ENCODE measurements at regions of chr5 and their contacts with region 1.

Region 1: DNA sequence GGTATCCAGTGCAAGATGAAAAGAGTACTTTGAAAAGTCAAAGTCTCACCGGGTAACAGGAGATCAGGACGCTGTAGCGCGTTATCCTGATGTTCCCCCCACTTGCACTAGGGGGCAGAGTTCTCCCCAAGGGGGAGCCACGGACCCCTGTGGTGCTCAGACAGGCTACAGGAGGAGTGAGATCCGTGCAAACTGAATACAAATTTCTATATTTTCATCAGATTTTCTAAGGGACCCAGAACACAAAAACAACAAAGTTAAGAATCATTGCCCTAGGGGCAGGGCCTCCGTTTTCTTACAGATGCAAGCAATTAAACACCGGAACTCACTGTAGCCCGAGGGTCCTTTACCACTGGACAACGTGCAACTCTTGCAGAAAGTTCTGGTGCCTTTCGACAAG is 2.0 kb downstream of the MYO10 start:
- DNase-seq: peak; percentile 80
- ATAC-seq: peak; percentile 55
- H3K4me3 ChIP-seq: peak overlapping the region; percentile 85
- H3K27ac ChIP-seq: peak overlapping the region; percentile 99
- H3K4me1 ChIP-seq: peaks cover 15% of the 10 kb centered on the region
- H3K27me3 ChIP-seq: no peaks in the 10 kb centered on the region
- CTCF ChIP-seq: peak; percentile 88
- POLR2A ChIP-seq: peak; percentile 74
- RAD21 ChIP-seq: peak; percentile 83

Region 2: GRCh38 chr5:16612007-16612406 is 322.1 kb before region 1 on chr5:
- CTCF ChIA-PET with region 1: no interaction called
- POLR2A ChIA-PET with region 1: no interaction called
- dilution Hi-C with region 1: no loop called
- in situ Hi-C with region 1: no loop called
- intact Hi-C with region 1: no loop called
- DNase-seq: no peak
- ATAC-seq: no peak
- H3K4me3 ChIP-seq: no peak overlapping the region
- H3K27ac ChIP-seq: no peak overlapping the region
- H3K4me1 ChIP-seq: peaks cover 2% of the 10 kb centered on the region; the same call in 1 of the 2 replicates
- H3K27me3 ChIP-seq: peaks cover 35% of the 10 kb centered on the region
- CTCF ChIP-seq: no peak
- POLR2A ChIP-seq: no peak
- RAD21 ChIP-seq: no peak

Region 3: DNA sequence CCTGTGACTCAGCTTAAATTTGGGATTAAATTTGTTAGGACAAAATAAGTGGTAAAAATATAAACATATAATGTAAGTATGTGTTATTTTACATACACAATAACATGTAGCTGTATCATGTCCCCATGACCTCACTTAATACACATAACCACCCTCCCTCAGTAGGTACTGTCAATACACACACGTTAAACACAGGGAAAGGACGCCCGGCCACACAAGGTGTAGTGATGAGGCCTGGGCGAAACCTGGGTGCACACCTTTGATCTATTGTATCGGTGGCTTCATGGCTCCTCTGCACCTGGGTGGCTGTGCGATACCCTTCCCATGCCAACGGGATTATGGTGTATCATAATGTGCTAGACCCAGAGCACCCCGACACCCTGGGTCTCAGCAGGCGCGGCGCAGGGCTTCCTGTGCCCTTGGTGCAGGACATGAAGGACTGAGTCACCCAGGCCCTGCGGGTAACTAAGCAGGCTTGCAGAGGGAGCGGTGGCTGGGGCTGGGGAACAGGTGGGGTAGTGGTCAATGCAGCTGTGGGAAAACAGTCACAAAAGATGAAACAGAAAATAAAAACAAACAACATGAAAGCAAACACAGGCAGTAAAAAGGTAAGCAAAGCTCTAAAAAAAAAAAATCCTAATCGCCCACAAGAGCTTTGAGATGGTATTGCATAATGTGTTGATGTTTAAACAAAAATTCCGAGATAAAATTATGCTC is 189.8 kb before region 1 on chr5:
- CTCF ChIA-PET with region 1: no interaction called
- POLR2A ChIA-PET with region 1: no interaction called
- dilution Hi-C with region 1: no loop called
- in situ Hi-C with region 1: no loop called
- intact Hi-C with region 1: no loop called
- DNase-seq: no peak
- ATAC-seq: no peak
- H3K4me3 ChIP-seq: no peak overlapping the region
- H3K27ac ChIP-seq: no peak overlapping the region
- H3K4me1 ChIP-seq: peaks cover 12% of the 10 kb centered on the region
- H3K27me3 ChIP-seq: no peaks in the 10 kb centered on the region
- CTCF ChIP-seq: no peak
- POLR2A ChIP-seq: no peak
- RAD21 ChIP-seq: no peak

Region 4: GRCh38 chr5:16791036-16791705 is 143.0 kb before region 1 on chr5:
- CTCF ChIA-PET with region 1: interaction called, 5 read pairs
- POLR2A ChIA-PET with region 1: no interaction called
- dilution Hi-C with region 1: no loop called
- in situ Hi-C with region 1: no loop called
- intact Hi-C with region 1: loop called (anchors 1 kb)
- DNase-seq: peak; percentile 74
- ATAC-seq: peak; percentile 66
- H3K4me3 ChIP-seq: no peak overlapping the region
- H3K27ac ChIP-seq: no peak overlapping the region
- H3K4me1 ChIP-seq: peaks cover 13% of the 10 kb centered on the region
- H3K27me3 ChIP-seq: no peaks in the 10 kb centered on the region
- CTCF ChIP-seq: peak; percentile 71
- POLR2A ChIP-seq: no peak
- RAD21 ChIP-seq: peak; percentile 80

Region 5: DNA sequence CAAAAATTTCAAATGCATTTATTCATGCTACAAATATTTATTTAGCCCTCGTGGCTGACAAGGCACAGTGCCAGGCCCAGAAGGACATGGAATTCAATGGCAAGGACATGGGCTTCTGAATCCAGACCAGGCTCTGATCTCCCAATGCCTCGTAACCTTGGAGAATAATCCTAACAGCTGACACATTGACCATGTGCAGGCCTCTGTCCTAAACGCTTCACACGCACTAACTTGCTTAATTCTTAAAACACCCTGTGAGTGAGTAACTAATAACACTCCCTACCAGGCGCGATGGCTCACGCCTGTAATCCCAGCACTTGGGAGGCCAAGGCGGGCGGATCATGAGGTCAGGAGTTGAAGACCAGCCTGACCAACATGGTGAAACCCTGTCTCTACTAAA is 31.3 kb before region 1 on chr5:
- CTCF ChIA-PET with region 1: no interaction called
- POLR2A ChIA-PET with region 1: no interaction called
- dilution Hi-C with region 1: no loop called
- in situ Hi-C with region 1: no loop called
- intact Hi-C with region 1: no loop called
- DNase-seq: no peak
- ATAC-seq: no peak
- H3K4me3 ChIP-seq: no peak overlapping the region
- H3K27ac ChIP-seq: no peak overlapping the region
- H3K4me1 ChIP-seq: peaks cover 24% of the 10 kb centered on the region
- H3K27me3 ChIP-seq: no peaks in the 10 kb centered on the region
- CTCF ChIP-seq: no peak
- POLR2A ChIP-seq: no peak
- RAD21 ChIP-seq: no peak

Region 6: DNA sequence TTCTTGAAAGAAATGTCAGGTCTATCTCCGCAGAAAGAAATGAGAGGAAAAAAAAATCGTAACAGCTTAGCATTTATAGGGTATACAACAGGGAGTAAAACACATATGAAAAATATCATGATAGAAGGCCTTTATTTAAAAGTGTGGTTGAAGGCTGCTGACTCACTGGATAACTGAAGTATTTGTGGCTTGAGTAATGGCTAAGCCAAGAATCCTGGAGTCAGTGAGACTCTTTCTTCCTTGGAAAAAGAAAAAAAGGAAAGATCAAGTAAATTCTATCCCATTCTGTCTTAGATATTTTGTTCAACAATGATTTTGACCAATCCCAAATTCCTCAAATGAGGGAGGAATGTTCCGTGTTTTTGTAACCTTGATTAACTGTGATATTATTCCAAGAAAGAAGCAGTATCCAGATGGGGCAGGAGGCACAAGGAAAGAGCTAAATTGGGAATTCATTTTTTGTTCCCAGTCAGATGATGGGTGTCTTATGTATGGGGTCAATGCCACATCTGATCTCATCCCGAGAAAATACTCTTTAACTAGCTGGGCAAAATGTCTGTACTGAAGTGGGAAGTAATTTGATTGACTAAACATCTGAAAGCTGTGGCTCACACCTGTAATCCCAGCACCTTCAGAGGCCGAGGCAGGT is 66.3 kb after region 1 on chr5:
- CTCF ChIA-PET with region 1: interaction called, 3 read pairs
- POLR2A ChIA-PET with region 1: interaction called, 12 read pairs
- dilution Hi-C with region 1: no loop called
- in situ Hi-C with region 1: no loop called
- intact Hi-C with region 1: loop called (anchors 2 kb)
- DNase-seq: peak; percentile 98
- ATAC-seq: peak; percentile 94
- H3K4me3 ChIP-seq: no peak overlapping the region
- H3K27ac ChIP-seq: peak overlapping the region; percentile 95
- H3K4me1 ChIP-seq: peaks cover 12% of the 10 kb centered on the region
- H3K27me3 ChIP-seq: no peaks in the 10 kb centered on the region
- CTCF ChIP-seq: no peak
- POLR2A ChIP-seq: no peak
- RAD21 ChIP-seq: peak; percentile 12; the same call in 1 of the 2 replicates

Region 7: DNA sequence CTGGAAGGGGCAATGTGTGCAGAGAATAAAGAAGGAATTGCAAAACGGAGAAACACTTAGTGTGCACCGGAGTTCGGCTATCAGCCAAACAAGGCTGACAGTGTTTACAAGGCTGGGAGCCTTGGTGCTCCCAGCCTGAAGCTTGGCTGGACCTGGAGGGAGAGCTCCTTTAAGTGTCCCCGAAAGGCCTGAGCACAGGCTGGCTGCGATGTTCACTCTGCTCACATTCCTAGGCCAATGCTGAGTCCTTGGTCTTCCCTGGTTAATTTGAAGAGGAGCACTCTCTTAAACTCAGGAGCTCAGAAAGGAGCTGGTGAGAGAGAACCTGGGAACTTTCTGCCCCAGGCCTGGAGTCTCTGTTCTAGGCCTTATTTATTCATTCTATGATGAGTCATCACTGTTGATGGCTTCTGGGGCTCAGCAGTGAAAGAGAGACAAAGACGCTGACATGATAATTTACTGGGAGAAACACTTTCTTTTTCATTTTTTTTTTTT is 90.6 kb after region 1 on chr5:
- CTCF ChIA-PET with region 1: no interaction called
- POLR2A ChIA-PET with region 1: no interaction called
- dilution Hi-C with region 1: no loop called
- in situ Hi-C with region 1: no loop called
- intact Hi-C with region 1: loop called (anchors 1 kb)
- DNase-seq: peak; percentile 85
- ATAC-seq: peak; percentile 76
- H3K4me3 ChIP-seq: no peak overlapping the region
- H3K27ac ChIP-seq: peak overlapping the region; percentile 90
- H3K4me1 ChIP-seq: peaks cover 17% of the 10 kb centered on the region
- H3K27me3 ChIP-seq: no peaks in the 10 kb centered on the region
- CTCF ChIP-seq: no peak
- POLR2A ChIP-seq: no peak
- RAD21 ChIP-seq: no peak

Region 8: GRCh38 chr5:17113163-17113958 is 179.2 kb after region 1 on chr5:
- CTCF ChIA-PET with region 1: no interaction called
- POLR2A ChIA-PET with region 1: no interaction called
- dilution Hi-C with region 1: no loop called
- in situ Hi-C with region 1: no loop called
- intact Hi-C with region 1: loop called (anchors 5 kb)
- DNase-seq: peak; percentile 89
- ATAC-seq: peak; percentile 73
- H3K4me3 ChIP-seq: no peak overlapping the region
- H3K27ac ChIP-seq: peak overlapping the region; percentile 98; the same call in 1 of the 2 replicates
- H3K4me1 ChIP-seq: peaks cover 6% of the 10 kb centered on the region
- H3K27me3 ChIP-seq: no peaks in the 10 kb centered on the region
- CTCF ChIP-seq: no peak
- POLR2A ChIP-seq: no peak
- RAD21 ChIP-seq: no peak

Region 9: GRCh38 chr5:17189381-17190036 is 255.4 kb after region 1 on chr5:
- CTCF ChIA-PET with region 1: interaction called, 8 read pairs
- POLR2A ChIA-PET with region 1: interaction called, 6 read pairs
- dilution Hi-C with region 1: no loop called
- in situ Hi-C with region 1: loop called (anchors 5 kb)
- intact Hi-C with region 1: loop called (anchors 1 kb)
- DNase-seq: peak; percentile 86
- ATAC-seq: peak; percentile 7; the same call in 1 of the 2 replicates
- H3K4me3 ChIP-seq: no peak overlapping the region
- H3K27ac ChIP-seq: peak overlapping the region; percentile 90
- H3K4me1 ChIP-seq: peaks cover 40% of the 10 kb centered on the region
- H3K27me3 ChIP-seq: no peaks in the 10 kb centered on the region
- CTCF ChIP-seq: peak; percentile 78
- POLR2A ChIP-seq: peak; percentile 58; the same call in 1 of the 2 replicates
- RAD21 ChIP-seq: peak; percentile 88

Measured in IMR-90 (cell line).